Panc1 (cell line): ENCODE measurements at regions of chr7 and their contacts with region 1.

Region 1: GRCh38 chr7:66170309-66171231 is 34.6 kb upstream of the TPST1 start:
- DNase-seq: no peak
- ATAC-seq: peak; percentile 44; the same call in 1 of the 2 replicates
- H3K4me3 ChIP-seq: no peak overlapping the region
- H3K27ac ChIP-seq: no peak overlapping the region
- H3K4me1 ChIP-seq: peaks cover 4% of the 10 kb centered on the region; the same call in 1 of the 2 replicates
- H3K27me3 ChIP-seq: no peaks in the 10 kb centered on the region
- CTCF ChIP-seq: no peak

Region 2: DNA sequence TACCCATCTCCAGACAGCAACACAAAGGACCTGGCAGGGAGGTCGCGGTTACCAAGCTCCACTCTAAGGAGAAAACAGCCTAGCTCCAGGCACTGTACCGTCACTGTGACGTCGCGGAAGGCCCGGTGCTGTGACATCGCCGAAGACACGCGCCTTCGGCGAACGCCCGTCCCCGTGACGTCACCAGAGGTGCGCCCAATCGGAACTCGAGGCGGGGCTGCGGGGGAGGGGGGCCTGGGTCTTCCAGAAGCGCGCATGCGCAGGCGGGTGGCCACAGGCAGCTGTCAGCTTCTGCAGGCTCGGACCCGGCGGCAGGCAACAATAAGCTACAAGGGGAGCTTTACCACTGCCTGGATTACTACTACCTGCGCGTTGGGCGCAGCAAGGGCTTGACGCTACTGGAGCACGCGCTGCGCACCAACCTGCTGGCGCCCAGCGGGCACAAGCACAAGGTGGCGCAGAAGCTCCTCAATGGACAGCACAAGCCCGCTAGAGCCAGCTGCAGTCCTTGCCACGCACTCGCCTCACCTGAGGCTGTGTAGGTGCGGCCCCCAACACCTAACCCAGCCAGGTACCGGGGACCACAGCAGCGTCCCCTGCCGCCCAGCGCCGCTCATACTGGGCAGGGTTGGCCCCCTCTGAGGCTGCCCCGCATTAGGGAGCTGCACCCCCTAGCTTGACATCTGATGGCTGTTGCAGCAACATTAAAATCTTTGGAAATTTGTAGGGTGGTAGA is 243.0 kb after region 1 on chr7:
- CTCF ChIA-PET with region 1: no interaction called
- POLR2A ChIA-PET with region 1: interaction called, 13 read pairs
- in situ Hi-C with region 1: no loop called
- intact Hi-C with region 1: no loop called
- DNase-seq: peak; percentile 65
- ATAC-seq: peak; percentile 93
- H3K4me3 ChIP-seq: peak overlapping the region; percentile 39 to 82
- H3K27ac ChIP-seq: peak overlapping the region; percentile 39; the same call in 1 of the 2 replicates
- H3K4me1 ChIP-seq: no peaks in the 10 kb centered on the region
- H3K27me3 ChIP-seq: no peaks in the 10 kb centered on the region
- CTCF ChIP-seq: peak; percentile 83